Activated CD4-positive, alpha-beta memory T cell treated with anti-CD3 and anti-CD28 coated beads for 36 hours (primary cell): ENCODE measurements at regions of chr9 and their contacts with region 1.

Region 1: DNA sequence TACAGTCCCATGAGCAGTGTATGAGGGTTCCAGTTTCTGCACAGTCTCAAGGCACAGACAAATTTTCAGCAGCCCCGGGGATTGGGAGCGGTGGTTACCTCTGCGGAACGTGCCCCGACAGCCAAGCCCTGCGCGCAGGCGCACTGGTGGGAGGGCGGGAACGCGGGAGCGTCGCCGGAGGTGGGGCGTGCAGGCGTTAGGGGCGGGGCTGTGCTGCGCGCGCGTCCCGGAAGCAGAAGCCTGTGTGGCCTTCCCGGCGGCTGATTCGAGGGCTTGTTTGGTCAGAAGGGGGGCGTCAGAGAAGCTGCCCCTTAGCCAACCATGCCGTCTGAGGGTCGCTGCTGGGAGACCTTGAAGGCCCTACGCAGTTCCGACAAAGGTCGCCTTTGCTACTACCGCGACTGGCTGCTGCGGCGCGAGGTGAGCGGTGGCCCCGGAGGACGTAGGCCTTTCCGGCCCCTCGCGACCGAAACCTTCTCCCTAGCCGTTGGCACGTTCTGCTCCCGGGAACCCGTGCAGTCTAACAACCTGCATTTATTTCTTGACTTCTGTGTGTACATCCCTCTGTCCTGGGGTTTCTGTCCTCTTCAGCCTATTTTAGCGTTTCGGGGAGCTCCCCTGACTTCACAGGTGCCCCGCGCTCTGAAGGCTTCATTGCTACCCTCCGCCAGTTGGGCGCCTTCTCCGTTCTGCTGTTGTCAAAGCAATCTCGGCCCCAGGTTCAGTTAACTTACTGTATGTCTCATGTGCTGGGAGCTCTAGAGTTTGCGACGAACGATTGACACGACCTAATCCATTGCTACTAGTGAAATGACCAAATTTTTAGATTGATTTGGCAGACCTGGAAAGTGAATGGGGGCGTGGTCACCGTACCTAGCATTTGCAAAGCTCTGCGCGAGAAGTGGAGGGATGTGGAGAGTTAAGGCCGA is at the start of gene GLE1:
- DNase-seq: peak; percentile 97
- H3K4me3 Mint-ChIP-seq: peak within 1 kb of the TSS; percentile 99
- H3K27ac Mint-ChIP-seq: peak within 1 kb of the TSS; percentile 97
- H3K4me1 Mint-ChIP-seq: peaks cover 26% of the 10 kb centered on the region
- H3K27me3 Mint-ChIP-seq: no peaks in the 10 kb centered on the region
- total RNA-seq, gene GLE1: 55.6 to 57.0 TPM

Region 2: GRCh38 chr9:128455849-128456612 is 48.7 kb before region 1 on chr9 and contains the start of gene ODF2:
- CTCF ChIA-PET with region 1: no interaction called
- POLR2A ChIA-PET with region 1: no interaction called
- intact Hi-C with region 1: loop called (anchors 1 kb)
- DNase-seq: peak; percentile 99
- H3K4me3 Mint-ChIP-seq: peak within 1 kb of the TSS; percentile 85
- H3K27ac Mint-ChIP-seq: peak within 1 kb of the TSS; percentile 81
- H3K4me1 Mint-ChIP-seq: peaks cover 16% of the 10 kb centered on the region
- H3K27me3 Mint-ChIP-seq: no peaks in the 10 kb centered on the region
- total RNA-seq, gene ODF2: 68.9 to 72.8 TPM

Region 3: DNA sequence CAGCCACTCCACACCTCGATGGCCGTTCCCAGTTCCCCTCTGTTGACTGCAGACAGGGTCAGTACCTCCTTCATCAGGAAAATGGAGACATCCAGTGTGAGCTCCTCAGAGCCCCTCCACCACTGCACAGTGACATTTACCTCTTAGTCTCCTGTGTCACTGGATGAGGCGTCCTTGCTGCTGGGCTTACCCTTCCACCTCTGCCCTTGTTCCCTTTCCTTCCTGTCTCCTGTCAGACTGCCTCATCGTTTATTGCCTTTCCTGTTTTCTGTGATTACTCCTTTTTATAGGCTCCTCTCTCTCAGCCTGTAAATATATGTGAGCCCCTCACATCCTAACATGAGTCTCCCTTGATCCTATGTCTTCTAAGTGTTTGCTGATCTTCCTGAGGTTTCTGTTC is 24.4 kb after region 1 on chr9:
- CTCF ChIA-PET with region 1: no interaction called
- POLR2A ChIA-PET with region 1: no interaction called
- intact Hi-C with region 1: no loop called
- DNase-seq: no peak
- H3K4me3 Mint-ChIP-seq: no peak overlapping the region
- H3K27ac Mint-ChIP-seq: no peak overlapping the region
- H3K4me1 Mint-ChIP-seq: no peaks in the 10 kb centered on the region
- H3K27me3 Mint-ChIP-seq: no peaks in the 10 kb centered on the region

Region 4: DNA sequence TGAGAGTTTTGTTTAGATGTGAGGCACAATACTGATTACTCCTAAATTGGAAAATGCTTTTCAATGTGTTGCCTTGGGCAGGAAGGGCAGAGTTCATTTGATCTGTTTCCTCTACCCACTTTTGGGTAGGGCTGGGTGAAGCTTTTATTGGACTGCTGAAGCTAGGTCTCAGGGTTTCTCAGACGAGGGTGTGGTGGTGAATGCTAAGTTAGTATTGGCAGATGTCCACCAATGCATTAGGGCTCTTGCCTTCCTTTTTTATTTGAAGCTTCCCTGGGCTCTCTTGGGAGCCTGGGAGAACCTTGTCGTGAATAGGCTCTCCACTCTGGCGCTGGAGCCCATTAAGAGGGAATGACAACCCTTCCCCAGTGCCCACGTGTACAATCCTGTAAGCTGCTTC is 70.7 kb after region 1 on chr9:
- CTCF ChIA-PET with region 1: no interaction called
- POLR2A ChIA-PET with region 1: no interaction called
- intact Hi-C with region 1: no loop called
- DNase-seq: no peak
- H3K4me3 Mint-ChIP-seq: no peak overlapping the region
- H3K27ac Mint-ChIP-seq: no peak overlapping the region
- H3K4me1 Mint-ChIP-seq: peaks cover 15% of the 10 kb centered on the region
- H3K27me3 Mint-ChIP-seq: no peaks in the 10 kb centered on the region